Colonic mucosa (tissue), 4 donors: ENCODE measurements at regions of chr6 and their contacts with region 1.

Region 1: GRCh38 chr6:55886185-55886836 is 10.9 kb upstream of the BMP5 start:
- DNase-seq: no peak
- H3K4me3 ChIP-seq: no peak overlapping the region
- H3K27ac ChIP-seq: no peak overlapping the region
- H3K4me1 ChIP-seq: no peaks in the 10 kb centered on the region
- H3K27me3 ChIP-seq: no peaks in the 10 kb centered on the region
- CTCF ChIP-seq: peak; percentile 15

Region 2: DNA sequence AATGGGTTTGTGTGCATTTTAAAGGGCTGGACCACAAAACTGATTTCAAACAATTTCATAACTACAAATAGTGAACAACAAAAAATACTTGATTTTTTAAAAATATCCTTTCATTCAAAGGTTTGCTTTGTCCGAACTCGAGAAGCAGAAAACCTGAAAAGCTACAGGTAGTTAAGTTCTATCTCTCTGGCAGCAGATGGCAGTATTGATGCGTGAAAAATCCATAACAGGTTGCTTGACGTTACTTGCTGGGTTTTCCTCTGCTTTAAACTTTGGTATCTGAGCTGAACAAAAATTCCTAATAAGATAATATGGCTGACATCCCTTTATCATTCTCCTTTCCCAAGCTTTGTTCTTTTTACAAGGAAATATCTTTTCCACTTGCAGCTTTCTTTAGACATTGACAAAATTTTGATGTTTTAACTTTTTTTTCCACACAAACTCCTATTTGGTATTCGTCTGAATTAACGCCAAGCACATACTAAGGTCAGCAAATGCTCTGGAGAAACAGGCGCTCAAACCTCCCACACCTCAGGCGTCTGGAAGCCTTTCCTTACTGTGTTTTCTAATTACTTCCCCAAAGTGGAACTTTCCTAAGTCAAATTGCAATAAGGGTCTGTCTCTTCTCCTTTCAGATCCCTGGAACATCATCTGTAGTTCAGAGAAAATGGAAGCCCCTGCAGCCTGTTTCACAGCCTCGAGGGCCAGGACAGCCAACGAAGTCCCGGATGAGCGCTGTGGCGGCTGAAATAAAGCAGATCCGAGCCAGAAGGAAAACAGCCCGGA is 609.4 kb before region 1 on chr6:
- intact Hi-C with region 1: loop called (anchors 5 kb)
- DNase-seq: peak; percentile 32
- H3K4me3 ChIP-seq: no peak overlapping the region
- H3K27ac ChIP-seq: no peak overlapping the region
- H3K4me1 ChIP-seq: no peaks in the 10 kb centered on the region
- H3K27me3 ChIP-seq: no peaks in the 10 kb centered on the region
- CTCF ChIP-seq: peak; percentile 47

Region 3: DNA sequence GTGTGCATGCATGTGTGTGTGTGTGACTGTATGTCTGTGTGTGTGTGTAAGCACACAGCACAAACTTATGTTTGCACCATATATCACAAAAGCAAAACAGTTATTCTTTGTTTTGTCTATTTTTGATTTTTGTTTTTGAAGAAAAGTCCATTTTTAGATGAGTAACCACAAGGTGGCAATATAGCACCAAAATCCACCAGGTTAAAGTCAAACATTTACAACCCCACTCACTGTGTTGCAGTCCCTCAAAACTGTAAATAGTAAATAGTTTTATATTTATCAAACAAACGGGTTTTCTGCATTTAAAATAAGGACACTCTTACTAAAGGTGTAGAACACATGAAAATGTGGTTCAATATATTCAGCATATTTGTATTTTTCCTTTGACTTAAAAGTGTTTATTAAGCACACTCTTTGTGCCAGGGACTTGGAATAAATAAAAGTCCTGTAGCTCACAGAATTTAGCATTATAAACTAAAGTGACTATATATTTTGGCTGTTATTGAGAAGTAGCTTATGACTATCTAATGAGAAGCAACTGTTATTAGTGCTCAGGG is 440.6 kb before region 1 on chr6:
- intact Hi-C with region 1: loop called (anchors 5 kb)
- DNase-seq: no peak
- H3K4me3 ChIP-seq: no peak overlapping the region
- H3K27ac ChIP-seq: no peak overlapping the region
- H3K4me1 ChIP-seq: no peaks in the 10 kb centered on the region
- H3K27me3 ChIP-seq: no peaks in the 10 kb centered on the region
- CTCF ChIP-seq: no peak

Region 4: DNA sequence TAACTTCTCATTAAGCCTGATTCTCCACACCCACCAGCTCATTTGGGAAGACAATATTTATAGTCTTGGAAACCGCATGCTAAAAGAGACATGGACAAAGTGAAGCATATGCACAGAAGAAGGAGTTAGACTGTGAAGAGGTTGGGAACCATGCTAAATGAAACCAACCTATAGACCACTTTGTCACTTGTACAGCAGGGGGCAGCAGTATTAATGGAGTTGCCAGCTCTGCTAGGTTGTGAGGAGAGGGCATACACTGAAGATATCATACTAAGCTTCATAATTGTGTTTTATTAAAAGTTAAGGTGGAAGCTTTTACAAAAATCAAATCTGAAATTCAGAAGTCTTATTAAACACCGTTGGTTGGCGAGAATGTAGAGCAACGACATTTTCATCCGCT is 269.0 kb before region 1 on chr6:
- intact Hi-C with region 1: loop called (anchors 10 kb)
- DNase-seq: peak; percentile 27
- H3K4me3 ChIP-seq: no peak overlapping the region
- H3K27ac ChIP-seq: no peak overlapping the region
- H3K4me1 ChIP-seq: no peaks in the 10 kb centered on the region
- H3K27me3 ChIP-seq: no peaks in the 10 kb centered on the region
- CTCF ChIP-seq: peak; percentile 24

Region 5: GRCh38 chr6:55841341-55841740 is 45.0 kb before region 1 on chr6:
- intact Hi-C with region 1: no loop called
- DNase-seq: no peak
- H3K4me3 ChIP-seq: no peak overlapping the region
- H3K27ac ChIP-seq: no peak overlapping the region
- H3K4me1 ChIP-seq: no peaks in the 10 kb centered on the region
- H3K27me3 ChIP-seq: no peaks in the 10 kb centered on the region
- CTCF ChIP-seq: no peak